Activated CD4-positive, alpha-beta T cell treated with anti-CD3 and anti-CD28 coated beads for 36 hours (primary cell): ENCODE measurements at regions of chr17 and their contacts with region 1.

Region 1: GRCh38 chr17:28252436-28252835 is 66.6 kb upstream of the TMEM97 start:
- DNase-seq: no peak
- ATAC-seq: no peak
- H3K4me3 Mint-ChIP-seq: no peak overlapping the region
- H3K27ac Mint-ChIP-seq: no peak overlapping the region
- H3K4me1 Mint-ChIP-seq: peaks cover 5% of the 10 kb centered on the region
- H3K27me3 Mint-ChIP-seq: peaks cover 14% of the 10 kb centered on the region

Region 2: DNA sequence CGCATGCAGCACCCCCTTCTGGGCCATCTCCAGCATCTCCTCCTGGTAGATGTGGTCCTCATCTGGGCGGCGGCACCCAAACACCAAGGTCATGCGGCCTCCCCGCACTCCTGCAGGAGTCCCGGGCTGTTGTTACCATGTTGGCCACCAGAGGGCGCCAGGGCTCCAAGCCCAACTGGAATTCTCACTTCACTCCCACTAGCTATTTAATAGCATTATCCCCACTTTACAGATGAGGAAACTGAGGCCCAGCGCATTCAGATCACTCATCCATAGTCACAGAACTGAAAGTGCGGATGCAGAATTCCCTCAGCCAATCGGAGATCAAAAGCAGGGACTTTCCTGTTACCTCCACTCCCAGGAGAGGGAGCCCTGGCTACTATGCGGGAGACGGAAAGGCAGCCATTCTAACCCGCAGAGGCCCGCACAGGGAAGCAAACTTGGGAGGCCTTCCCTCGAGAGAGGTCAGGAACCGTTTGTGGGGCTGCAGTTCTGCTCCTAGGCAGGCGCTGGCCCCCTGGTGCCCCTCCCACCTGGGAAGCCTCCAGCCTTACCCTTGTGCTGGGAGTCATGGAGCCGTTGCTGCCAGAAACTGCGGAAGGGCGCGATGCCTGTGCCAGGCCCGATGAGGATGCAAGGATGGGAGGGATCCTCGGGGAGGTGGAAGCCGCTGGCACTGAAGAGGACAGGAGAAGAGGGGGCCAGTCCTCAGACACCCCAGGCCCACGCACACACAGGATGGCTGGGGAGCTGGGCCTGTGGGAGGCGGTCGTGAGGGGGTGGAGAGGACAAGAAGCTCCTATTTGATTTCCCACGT is 492.2 kb before region 1 on chr17:
- CTCF ChIA-PET with region 1: no interaction called
- POLR2A ChIA-PET with region 1: no interaction called
- intact Hi-C with region 1: loop called (anchors 1 to 5 kb)
- DNase-seq: peak; percentile 86
- ATAC-seq: peak; percentile 64
- H3K4me3 Mint-ChIP-seq: no peak overlapping the region
- H3K27ac Mint-ChIP-seq: no peak overlapping the region
- H3K4me1 Mint-ChIP-seq: no peaks in the 10 kb centered on the region
- H3K27me3 Mint-ChIP-seq: peaks cover 3% of the 10 kb centered on the region

Region 3: GRCh38 chr17:28193241-28193640 is 59.2 kb before region 1 on chr17:
- CTCF ChIA-PET with region 1: interaction called, 3 read pairs
- POLR2A ChIA-PET with region 1: no interaction called
- intact Hi-C with region 1: loop called in 1 of 2 experiments (anchors 10 kb)
- DNase-seq: no peak
- ATAC-seq: no peak
- H3K4me3 Mint-ChIP-seq: no peak overlapping the region
- H3K27ac Mint-ChIP-seq: no peak overlapping the region
- H3K4me1 Mint-ChIP-seq: peaks cover 4% of the 10 kb centered on the region
- H3K27me3 Mint-ChIP-seq: no peaks in the 10 kb centered on the region

Region 4: DNA sequence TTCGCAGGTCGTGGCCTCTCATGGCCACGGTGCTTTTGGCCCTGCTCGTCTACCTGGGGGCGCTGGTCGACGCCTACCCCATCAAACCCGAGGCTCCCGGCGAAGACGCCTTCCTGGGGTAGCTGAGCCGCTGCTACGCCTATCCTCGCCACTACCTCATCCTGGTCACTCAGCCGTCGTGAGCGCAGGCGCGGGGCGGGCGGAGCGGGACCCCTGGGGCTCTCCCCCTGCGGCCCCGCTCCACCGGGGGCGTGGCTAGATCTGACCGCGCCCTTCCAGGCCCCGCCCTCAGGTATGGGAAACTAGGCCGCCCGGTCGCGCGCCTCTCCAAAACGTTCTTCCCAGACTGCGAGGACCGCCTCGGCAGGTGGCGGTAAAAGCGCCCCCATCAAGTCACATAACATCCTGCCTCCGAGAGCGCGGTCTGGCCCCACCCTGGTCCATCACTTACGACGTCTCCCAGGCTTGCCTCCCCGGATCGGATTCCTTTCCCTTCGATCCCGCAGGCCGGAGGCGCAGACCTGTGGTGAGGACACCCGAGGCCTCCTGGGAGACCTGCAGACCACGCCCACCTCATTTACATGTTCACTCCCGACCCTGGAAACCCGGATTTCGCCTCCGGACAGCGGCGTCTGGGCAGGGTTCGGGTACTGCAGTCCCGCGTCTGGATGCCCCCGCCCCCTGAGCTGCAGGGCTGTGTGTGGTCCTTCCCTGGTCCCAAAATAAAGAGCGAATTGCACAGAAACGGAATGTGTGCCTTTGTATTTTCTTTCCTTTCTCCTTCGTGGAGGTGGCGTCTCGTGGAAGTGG is 24.9 kb before region 1 on chr17:
- CTCF ChIA-PET with region 1: interaction called, 21 read pairs
- POLR2A ChIA-PET with region 1: no interaction called
- intact Hi-C with region 1: no loop called
- DNase-seq: peak; percentile 55
- ATAC-seq: peak; percentile 54
- H3K4me3 Mint-ChIP-seq: peak overlapping the region; percentile 73
- H3K27ac Mint-ChIP-seq: no peak overlapping the region
- H3K4me1 Mint-ChIP-seq: peaks cover 9% of the 10 kb centered on the region
- H3K27me3 Mint-ChIP-seq: peaks cover 25% of the 10 kb centered on the region

Region 5: DNA sequence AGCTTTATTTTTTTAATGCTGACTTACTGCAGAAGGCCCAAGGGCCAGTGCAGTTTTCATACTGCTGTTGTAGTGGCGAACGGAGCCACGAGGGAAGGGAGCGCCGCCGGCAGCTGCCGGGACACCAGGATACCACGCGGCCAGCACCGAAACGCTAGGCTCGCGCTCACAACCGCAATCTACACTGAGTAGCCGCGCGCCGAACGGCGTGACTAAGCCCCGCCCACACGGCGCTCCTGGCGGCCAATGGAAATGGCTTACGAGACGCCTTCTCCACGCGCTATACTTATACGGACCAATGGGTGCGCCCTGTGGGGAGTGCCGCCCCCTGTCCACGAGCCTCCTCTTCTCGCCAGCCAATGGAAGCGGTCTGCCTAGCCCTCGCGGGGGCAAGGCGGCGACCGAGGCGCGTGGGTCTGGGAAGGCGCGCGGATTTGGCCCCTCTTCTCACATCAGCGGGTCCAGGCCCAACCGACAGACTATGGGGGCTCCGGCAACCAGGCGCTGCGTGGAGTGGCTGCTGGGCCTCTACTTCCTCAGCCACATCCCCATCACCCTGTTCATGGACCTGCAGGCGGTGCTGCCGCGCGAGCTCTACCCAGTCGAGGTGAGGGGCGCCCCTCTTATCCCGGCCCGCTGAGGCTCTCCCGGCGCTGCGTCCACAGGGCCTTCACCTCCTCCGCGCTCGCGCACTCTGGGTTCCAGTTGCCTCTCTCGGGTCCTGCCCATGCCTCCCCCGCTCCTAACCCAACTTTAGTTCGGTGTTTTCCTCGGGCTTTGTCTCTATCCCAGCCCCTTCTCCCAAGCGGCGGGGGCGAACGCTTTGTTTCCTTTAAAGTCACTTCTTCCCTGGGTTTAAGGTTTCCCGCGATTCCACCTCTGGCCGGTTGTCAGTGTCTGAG is 66.6 kb after region 1 on chr17 and contains the start of gene TMEM97:
- CTCF ChIA-PET with region 1: interaction called, 3 read pairs
- POLR2A ChIA-PET with region 1: no interaction called
- intact Hi-C with region 1: loop called in 1 of 2 experiments (anchors 1 kb)
- DNase-seq: peak; percentile 98
- ATAC-seq: peak; percentile 99
- H3K4me3 Mint-ChIP-seq: peak within 1 kb of the TSS; percentile 96
- H3K27ac Mint-ChIP-seq: peak within 1 kb of the TSS; percentile 88
- H3K4me1 Mint-ChIP-seq: peaks cover 30% of the 10 kb centered on the region
- H3K27me3 Mint-ChIP-seq: no peaks in the 10 kb centered on the region
- total RNA-seq, gene TMEM97: 31.0 to 49.3 TPM

Region 6: DNA sequence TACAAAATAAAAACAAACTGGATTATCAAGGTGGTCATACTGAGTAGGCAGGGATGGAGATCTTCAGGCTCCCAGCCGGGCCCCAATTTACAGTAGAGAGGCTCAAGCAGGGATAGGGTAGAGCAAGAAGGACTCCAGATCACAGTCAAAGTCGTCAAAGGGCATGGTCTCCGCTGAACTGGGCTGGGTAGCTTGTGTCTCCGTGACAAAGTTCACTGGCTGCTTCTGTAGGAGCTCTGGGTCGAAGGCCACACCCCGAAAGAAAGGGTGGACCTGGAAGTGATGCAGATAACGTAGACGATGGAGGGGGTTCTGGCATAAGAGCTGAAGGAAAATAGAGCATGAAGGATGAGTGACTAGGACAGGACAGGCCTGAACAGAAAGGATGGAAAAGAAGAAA is 357.9 kb after region 1 on chr17:
- CTCF ChIA-PET with region 1: no interaction called
- POLR2A ChIA-PET with region 1: no interaction called
- intact Hi-C with region 1: no loop called
- DNase-seq: no peak
- ATAC-seq: no peak
- H3K4me3 Mint-ChIP-seq: no peak overlapping the region
- H3K27ac Mint-ChIP-seq: no peak overlapping the region
- H3K4me1 Mint-ChIP-seq: peaks cover 3% of the 10 kb centered on the region
- H3K27me3 Mint-ChIP-seq: no peaks in the 10 kb centered on the region